ENCODE measurements at regions of chr6 and their contacts with region 1.

Region 1: GRCh38 chr6:71383901-71384489 is 95.4 kb downstream of the OGFRL1 start:
- DNase-seq: no peak
- ATAC-seq: no peak
- H3K4me3 ChIP-seq: no peak overlapping the region
- H3K27ac ChIP-seq: no peak overlapping the region
- H3K4me1 ChIP-seq: peaks cover 0 to 54% (median 25%) of the 10 kb centered on the region in 12 donors
- H3K27me3 ChIP-seq: no peaks in the 10 kb centered on the region
- CTCF ChIP-seq: peak; percentile 46 to 88 (median 70)
- POLR2A ChIP-seq: no peak

Region 2: DNA sequence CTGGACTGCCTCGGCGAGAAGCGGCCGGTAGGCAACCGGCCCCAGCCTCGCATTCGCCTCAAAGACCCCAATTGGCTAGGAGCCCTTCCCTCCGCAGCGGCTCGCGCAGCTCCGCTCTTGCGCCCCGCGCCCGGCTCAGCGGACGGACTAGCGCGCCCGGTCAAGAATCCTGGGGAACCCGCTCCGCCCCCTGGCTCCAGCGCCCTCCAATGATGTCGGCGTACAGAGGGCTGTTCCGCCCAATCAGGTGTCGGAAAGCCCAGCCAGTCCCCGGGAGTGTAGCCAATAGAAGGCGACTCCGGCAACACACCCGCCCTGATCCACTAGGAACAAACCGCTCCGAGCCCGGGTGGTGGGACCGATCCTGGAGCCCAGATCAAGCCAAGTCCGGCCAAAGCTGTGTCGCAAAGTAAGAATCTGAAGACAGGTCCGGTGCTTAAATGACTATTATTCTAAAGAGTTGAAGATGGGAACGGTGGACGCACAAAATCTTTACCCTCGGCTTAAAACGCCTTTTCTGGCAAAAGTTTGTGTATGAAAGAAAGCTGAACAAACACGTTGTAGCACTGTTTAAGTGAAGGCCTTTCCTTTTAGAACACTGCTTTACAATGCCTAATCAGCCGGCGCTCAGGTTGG is 36.8 kb after region 1 on chr6:
- intact Hi-C with region 1: loop called in 5 of 10 experiments (anchors 2 to 5 kb)
- DNase-seq: peak; percentile 95 to 98 (median 98)
- ATAC-seq: peak; percentile 98 to 99 (median 99)
- H3K4me3 ChIP-seq: peak overlapping the region; percentile 74 to 94 (median 88)
- H3K27ac ChIP-seq: peak overlapping the region; percentile 89 to 99 (median 97)
- H3K4me1 ChIP-seq: peaks cover 4 to 28% (median 19%) of the 10 kb centered on the region in 12 donors
- H3K27me3 ChIP-seq: peaks cover 0 to 20% (median 0%) of the 10 kb centered on the region in 9 donors
- CTCF ChIP-seq: peak in 1 of 12 donors; percentile 11
- POLR2A ChIP-seq: peak; percentile 87 to 99

Region 3: DNA sequence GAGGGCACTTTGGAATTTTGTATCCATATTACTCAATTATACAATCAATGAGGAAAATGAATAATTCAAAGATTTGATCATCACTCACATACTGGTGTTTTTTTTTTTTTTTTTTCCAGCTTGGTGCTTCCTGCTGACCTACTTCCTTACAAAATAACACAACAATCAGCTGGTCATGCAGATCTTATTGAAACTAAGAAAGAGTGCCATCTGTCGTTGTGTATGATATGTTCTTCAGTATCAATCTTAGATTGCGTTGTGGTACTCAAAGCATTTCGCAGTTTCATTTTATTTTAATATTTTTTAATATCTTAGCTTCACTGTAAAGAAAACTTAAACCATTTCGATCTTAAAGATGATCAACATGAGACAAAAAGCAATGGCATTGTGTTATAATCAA is 60.2 kb after region 1 on chr6:
- intact Hi-C with region 1: loop called in 5 of 10 experiments (anchors 5 to 10 kb)
- DNase-seq: no peak
- ATAC-seq: peak in 2 of 4 donors; percentile 53 to 64
- H3K4me3 ChIP-seq: peak overlapping the region in 4 of 12 donors; percentile 3 to 39 (median 12)
- H3K27ac ChIP-seq: no peak overlapping the region
- H3K4me1 ChIP-seq: peaks cover 0 to 17% (median 0%) of the 10 kb centered on the region in 12 donors
- H3K27me3 ChIP-seq: no peaks in the 10 kb centered on the region
- CTCF ChIP-seq: peak in 9 of 12 donors; percentile 9 to 50 (median 30)
- POLR2A ChIP-seq: no peak

Region 4: GRCh38 chr6:71510057-71510713 is 126.2 kb after region 1 on chr6:
- intact Hi-C with region 1: loop called (anchors 1 to 5 kb)
- DNase-seq: peak; percentile 39 to 57 (median 47)
- ATAC-seq: peak; percentile 69 to 94 (median 82)
- H3K4me3 ChIP-seq: no peak overlapping the region
- H3K27ac ChIP-seq: no peak overlapping the region
- H3K4me1 ChIP-seq: peaks cover 0 to 18% (median 4%) of the 10 kb centered on the region in 12 donors
- H3K27me3 ChIP-seq: no peaks in the 10 kb centered on the region
- CTCF ChIP-seq: peak; percentile 36 to 80 (median 68)
- POLR2A ChIP-seq: no peak

Region 5: GRCh38 chr6:71642120-71642519 is 258.1 kb after region 1 on chr6:
- intact Hi-C with region 1: no loop called
- DNase-seq: no peak
- ATAC-seq: no peak
- H3K4me3 ChIP-seq: no peak overlapping the region
- H3K27ac ChIP-seq: no peak overlapping the region
- H3K4me1 ChIP-seq: no peaks in the 10 kb centered on the region
- H3K27me3 ChIP-seq: no peaks in the 10 kb centered on the region
- CTCF ChIP-seq: no peak
- POLR2A ChIP-seq: no peak

Region 6: GRCh38 chr6:72084992-72085569 is 701.1 kb after region 1 on chr6:
- intact Hi-C with region 1: loop called in 1 of 10 experiments (anchors 10 kb)
- DNase-seq: no peak
- ATAC-seq: no peak
- H3K4me3 ChIP-seq: no peak overlapping the region
- H3K27ac ChIP-seq: no peak overlapping the region
- H3K4me1 ChIP-seq: no peaks in the 10 kb centered on the region
- H3K27me3 ChIP-seq: peaks cover 0 to 9% (median 0%) of the 10 kb centered on the region in 9 donors
- CTCF ChIP-seq: peak; percentile 25 to 66 (median 50)
- POLR2A ChIP-seq: no peak

Measured in heart left ventricle (tissue), 16 donors.